ENCODE measurements at regions of chr4 and their contacts with region 1.

Region 1: GRCh38 chr4:87838890-87839591 is 6.3 kb downstream of the MEPE start:
- DNase-seq: no peak
- H3K4me3 ChIP-seq: no peak overlapping the region
- H3K4me3 Mint-ChIP-seq: no peak overlapping the region
- H3K27ac ChIP-seq: no peak overlapping the region
- H3K27ac Mint-ChIP-seq: no peak overlapping the region
- H3K4me1 ChIP-seq: no peaks in the 10 kb centered on the region
- H3K4me1 Mint-ChIP-seq: no peaks in the 10 kb centered on the region
- H3K27me3 ChIP-seq: no peaks in the 10 kb centered on the region
- H3K27me3 Mint-ChIP-seq: peaks cover 11 to 18% of the 10 kb centered on the region in 2 donors

Region 2: DNA sequence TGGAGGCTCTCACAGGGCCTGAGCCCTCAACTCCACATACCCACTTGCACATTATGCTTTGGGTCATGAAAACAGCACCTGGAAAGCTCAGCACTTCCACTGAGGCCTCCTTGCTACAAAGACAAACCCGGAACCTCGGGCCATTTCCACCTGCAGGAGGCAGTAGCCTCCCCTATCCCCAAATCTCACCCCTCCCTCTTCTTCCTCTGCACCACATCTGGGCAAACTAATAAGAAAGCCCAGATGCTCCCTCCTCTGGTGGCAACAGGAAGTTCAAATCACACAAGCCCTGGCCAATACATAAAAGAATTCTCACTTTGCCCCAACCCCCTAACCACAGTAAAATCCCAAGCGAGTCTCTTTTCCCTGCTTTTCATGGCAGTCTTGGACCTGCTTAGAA is 1615.6 kb before region 1 on chr4:
- CTCF ChIA-PET with region 1: no interaction called
- POLR2A ChIA-PET with region 1: no interaction called
- intact Hi-C with region 1: no loop called
- DNase-seq: no peak
- H3K4me3 ChIP-seq: no peak overlapping the region
- H3K4me3 Mint-ChIP-seq: no peak overlapping the region
- H3K27ac ChIP-seq: no peak overlapping the region
- H3K27ac Mint-ChIP-seq: no peak overlapping the region
- H3K4me1 ChIP-seq: no peaks in the 10 kb centered on the region
- H3K4me1 Mint-ChIP-seq: no peaks in the 10 kb centered on the region
- H3K27me3 ChIP-seq: no peaks in the 10 kb centered on the region
- H3K27me3 Mint-ChIP-seq: no peaks in the 10 kb centered on the region

Region 3: DNA sequence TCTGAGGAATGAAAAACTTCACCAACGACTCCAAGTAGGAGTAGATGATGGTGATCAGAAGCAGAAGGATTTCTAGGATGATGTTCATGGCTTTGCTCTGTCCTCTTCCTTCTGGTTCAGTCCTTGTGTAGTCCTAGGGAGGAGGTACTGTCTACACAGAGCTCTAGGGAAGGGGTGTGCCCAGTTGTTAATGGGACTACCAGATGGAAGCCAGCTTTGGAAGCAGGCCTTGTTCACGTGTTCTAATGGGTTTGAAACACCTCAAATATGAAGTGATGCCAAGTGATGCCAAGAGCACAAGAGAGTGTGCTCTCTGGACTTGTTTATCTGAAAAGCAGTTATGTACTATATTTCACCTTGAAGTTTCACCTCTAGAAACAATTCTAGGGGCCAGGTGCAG is 516.3 kb before region 1 on chr4 and contains the start of gene HSD17B13:
- CTCF ChIA-PET with region 1: no interaction called
- POLR2A ChIA-PET with region 1: no interaction called
- intact Hi-C with region 1: no loop called
- DNase-seq: no peak
- H3K4me3 ChIP-seq: no peak within 1 kb of the TSS
- H3K4me3 Mint-ChIP-seq: no peak within 1 kb of the TSS
- H3K27ac ChIP-seq: no peak within 1 kb of the TSS
- H3K27ac Mint-ChIP-seq: peak within 1 kb of the TSS in 1 of 7 donors; percentile 5
- H3K4me1 ChIP-seq: no peaks in the 10 kb centered on the region
- H3K4me1 Mint-ChIP-seq: no peaks in the 10 kb centered on the region
- H3K27me3 ChIP-seq: no peaks in the 10 kb centered on the region
- H3K27me3 Mint-ChIP-seq: no peaks in the 10 kb centered on the region
- total RNA-seq, gene HSD17B13: 0.35 to 0.58 TPM

Region 4: DNA sequence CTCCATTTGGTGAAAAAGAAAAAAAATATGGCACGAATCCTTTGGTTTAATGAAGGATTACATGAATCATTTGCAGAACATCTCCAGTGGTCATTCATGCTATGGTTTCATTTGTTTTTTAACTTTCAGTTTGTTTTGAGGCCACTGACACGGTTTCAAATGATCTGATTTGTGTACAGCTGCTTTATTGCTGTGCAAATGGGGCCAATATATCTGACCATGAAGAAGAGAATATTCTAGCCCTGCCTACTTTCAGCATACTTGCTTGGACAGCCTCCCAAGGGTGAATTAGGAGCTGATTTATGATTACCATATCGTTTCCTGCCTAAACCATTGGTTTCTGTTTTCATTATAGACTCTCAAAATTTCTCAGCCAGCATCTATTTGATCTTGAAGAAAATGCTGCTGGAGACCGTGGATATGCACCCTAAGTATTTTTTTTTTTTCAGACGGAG is 340.6 kb before region 1 on chr4:
- CTCF ChIA-PET with region 1: no interaction called
- POLR2A ChIA-PET with region 1: no interaction called
- intact Hi-C with region 1: loop called (anchors 5 kb)
- DNase-seq: no peak
- H3K4me3 ChIP-seq: no peak overlapping the region
- H3K4me3 Mint-ChIP-seq: peak overlapping the region in 7 of 8 donors; percentile 7 to 56 (median 25)
- H3K27ac ChIP-seq: no peak overlapping the region
- H3K27ac Mint-ChIP-seq: peak overlapping the region in 2 of 7 donors; percentile 29 to 53
- H3K4me1 ChIP-seq: peaks cover 3% of the 10 kb centered on the region
- H3K4me1 Mint-ChIP-seq: peaks cover 10 to 22% (median 14%) of the 10 kb centered on the region in 4 donors
- H3K27me3 ChIP-seq: no peaks in the 10 kb centered on the region
- H3K27me3 Mint-ChIP-seq: no peaks in the 10 kb centered on the region

Region 5: GRCh38 chr4:87669373-87669772 is 169.7 kb before region 1 on chr4:
- CTCF ChIA-PET with region 1: no interaction called
- POLR2A ChIA-PET with region 1: no interaction called
- intact Hi-C with region 1: no loop called
- DNase-seq: no peak
- H3K4me3 ChIP-seq: no peak overlapping the region
- H3K4me3 Mint-ChIP-seq: no peak overlapping the region
- H3K27ac ChIP-seq: no peak overlapping the region
- H3K27ac Mint-ChIP-seq: no peak overlapping the region
- H3K4me1 ChIP-seq: no peaks in the 10 kb centered on the region
- H3K4me1 Mint-ChIP-seq: no peaks in the 10 kb centered on the region
- H3K27me3 ChIP-seq: no peaks in the 10 kb centered on the region
- H3K27me3 Mint-ChIP-seq: peaks cover 0 to 11% of the 10 kb centered on the region in 2 donors